ENCODE measurements at regions of chr1 and their contacts with region 1.

Region 1: DNA sequence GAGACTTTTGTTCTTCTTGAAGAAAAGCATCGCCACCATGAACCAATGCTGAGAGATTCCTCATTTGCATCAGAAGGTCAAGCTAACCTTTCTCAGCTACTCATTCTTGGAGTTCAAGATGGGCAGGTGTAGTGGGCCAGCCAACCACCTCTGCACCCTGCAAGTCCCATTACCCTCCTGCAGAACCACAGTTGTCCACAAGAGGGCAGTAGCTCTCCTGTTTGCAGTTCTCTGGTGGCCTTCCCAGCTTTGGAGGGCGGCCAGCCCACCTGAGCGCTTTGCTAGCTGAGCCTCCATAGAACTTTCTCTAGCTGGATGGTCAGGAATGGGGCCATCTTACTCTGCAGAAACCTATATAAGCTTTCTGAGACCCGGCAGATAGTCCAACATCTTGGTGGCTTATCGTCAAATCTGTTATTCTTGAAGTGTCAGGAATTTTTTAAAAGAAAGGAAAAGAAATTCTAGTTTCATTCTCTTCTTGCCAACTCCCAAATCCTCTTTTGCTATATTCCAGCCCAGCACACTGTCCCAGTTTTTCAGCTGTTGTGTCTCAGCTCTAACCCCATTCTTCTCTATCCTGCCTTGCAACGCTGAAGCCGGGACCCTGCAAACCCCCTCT is 11.0 kb upstream of the LMX1A start:
- H3K4me3 ChIP-seq: no peak overlapping the region
- H3K27ac ChIP-seq: no peak overlapping the region
- H3K4me1 ChIP-seq: no peaks in the 10 kb centered on the region
- CTCF ChIP-seq: peak; percentile 47; the same call in 1 of the 2 replicates

Region 2: GRCh38 chr1:164999146-164999545 is 368.3 kb before region 1 on chr1:
- CTCF ChIA-PET with region 1: no interaction called
- POLR2A ChIA-PET with region 1: no interaction called
- H3K4me3 ChIP-seq: no peak overlapping the region
- H3K27ac ChIP-seq: no peak overlapping the region
- H3K4me1 ChIP-seq: no peaks in the 10 kb centered on the region
- CTCF ChIP-seq: no peak

Region 3: DNA sequence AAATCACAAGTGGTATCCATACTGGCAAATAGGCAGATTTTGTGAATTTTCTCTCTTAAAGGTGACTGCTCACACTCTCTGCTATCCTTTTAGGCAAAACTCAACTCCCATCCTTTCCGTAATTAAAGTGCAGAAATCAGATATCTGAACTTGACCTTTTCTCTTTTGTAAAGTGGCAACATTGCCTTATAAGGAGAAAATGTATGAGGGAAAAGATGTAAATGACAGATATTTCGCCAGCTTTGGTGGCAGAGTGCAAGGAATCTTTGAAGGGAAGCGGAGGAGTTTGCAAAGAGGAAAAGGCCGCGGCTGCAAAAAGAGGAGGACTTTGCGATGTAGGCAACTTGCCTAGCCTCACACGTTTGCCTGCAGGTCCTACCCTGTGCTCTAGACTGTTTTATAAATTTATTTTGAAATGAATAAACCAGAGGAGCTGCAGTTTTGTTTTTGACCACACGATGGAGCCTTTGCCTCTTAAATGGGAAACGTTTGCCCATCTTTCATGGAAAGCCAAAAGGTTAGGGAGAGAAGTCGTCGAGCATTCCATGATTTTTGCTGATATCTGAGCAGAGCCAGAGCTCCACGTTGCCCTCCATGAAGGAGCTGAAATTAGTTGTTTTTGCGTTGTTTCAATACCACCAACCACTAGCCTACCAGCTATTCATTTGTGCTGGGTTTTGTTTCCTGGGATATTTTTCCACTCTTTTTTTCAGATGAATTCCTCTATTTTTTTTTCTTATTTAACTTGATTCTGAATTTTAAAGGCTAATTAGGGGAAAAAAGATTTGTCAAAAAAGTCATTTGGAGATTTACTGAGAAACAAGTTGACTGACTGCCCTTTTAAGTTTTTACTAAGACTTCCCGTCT is 253.2 kb before region 1 on chr1:
- CTCF ChIA-PET with region 1: interaction called, 14 read pairs
- POLR2A ChIA-PET with region 1: no interaction called
- H3K4me3 ChIP-seq: no peak overlapping the region
- H3K27ac ChIP-seq: no peak overlapping the region
- H3K4me1 ChIP-seq: no peaks in the 10 kb centered on the region
- CTCF ChIP-seq: peak; percentile 24; the same call in 1 of the 2 replicates

Region 4: DNA sequence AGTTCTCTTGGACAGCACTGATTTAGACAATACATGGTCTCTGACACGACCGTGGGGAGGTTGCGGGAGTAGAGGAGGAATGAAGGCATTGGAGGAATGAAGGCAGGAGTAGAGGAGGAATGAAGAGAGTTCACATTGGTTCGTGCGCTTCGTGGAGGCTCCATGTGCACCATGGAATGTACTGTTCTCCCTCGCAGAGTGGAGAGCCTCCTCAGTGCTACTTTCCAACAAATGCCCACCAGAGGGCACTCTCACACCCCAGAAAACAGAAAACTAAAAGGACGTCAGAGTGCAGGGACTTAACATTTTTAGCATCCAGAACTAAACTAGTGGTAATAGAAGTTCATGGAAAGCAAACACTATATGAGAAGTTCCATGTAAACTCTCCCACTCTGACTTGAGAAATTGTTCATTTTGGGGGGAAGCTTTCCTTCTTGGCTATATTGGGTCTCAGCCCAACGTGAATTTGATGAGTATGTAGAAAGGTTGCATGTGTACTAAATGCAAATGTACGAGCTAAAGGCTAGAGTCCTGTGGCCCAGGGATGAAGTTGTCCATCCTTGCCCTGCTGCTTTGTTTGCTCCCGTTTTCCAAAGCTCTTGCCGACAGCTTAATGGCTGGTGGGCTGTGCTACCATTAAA is 222.6 kb before region 1 on chr1:
- CTCF ChIA-PET with region 1: interaction called, 46 read pairs
- POLR2A ChIA-PET with region 1: no interaction called
- H3K4me3 ChIP-seq: no peak overlapping the region
- H3K27ac ChIP-seq: no peak overlapping the region
- H3K4me1 ChIP-seq: no peaks in the 10 kb centered on the region
- CTCF ChIP-seq: peak; percentile 55

Region 5: DNA sequence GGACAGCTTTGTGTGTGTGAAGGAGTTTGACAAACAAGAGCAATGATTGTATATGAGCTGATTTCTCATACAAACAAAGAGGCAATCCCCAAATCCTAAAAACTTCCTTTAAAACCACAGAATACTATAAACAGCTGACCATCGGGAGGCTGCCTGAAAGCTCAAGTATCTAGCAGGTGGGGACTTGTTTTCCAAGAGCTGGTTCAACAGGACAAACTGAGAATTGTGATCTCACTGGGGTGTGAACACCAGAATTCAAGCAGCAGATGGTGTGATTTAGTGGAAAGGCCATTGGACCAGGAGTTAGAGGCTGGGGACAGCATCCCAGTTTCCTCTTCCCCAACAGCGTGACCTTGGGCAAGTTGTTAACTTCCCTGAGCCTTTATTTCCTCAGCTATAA is 24.9 kb before region 1 on chr1:
- CTCF ChIA-PET with region 1: interaction called, 49 read pairs
- POLR2A ChIA-PET with region 1: no interaction called
- H3K4me3 ChIP-seq: no peak overlapping the region
- H3K27ac ChIP-seq: no peak overlapping the region
- H3K4me1 ChIP-seq: no peaks in the 10 kb centered on the region
- CTCF ChIP-seq: no peak

Region 6: DNA sequence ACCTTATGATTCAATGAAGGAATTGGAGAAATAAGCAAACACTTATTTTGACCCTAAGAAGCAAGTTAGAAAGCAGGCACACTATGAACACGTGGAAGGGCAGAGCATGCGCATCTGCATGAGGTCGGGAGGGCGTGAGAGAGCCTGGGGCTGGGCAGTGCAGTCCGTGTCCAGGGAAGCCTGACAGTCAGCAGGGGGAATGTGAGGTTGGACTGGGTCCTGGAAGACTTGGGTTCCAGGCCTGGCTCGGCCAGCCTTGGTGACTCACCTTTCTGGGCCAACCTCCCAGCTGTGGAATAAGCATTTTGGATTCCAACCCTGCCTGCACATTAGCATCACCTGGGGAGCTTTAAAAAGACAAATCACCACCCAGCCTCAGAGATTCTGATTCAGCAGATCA is 15.6 kb after region 1 on chr1:
- CTCF ChIA-PET with region 1: interaction called, 32 read pairs
- POLR2A ChIA-PET with region 1: no interaction called
- H3K4me3 ChIP-seq: no peak overlapping the region
- H3K27ac ChIP-seq: no peak overlapping the region
- H3K4me1 ChIP-seq: no peaks in the 10 kb centered on the region
- CTCF ChIP-seq: no peak

Region 7: GRCh38 chr1:165403835-165404482 is 36.5 kb after region 1 on chr1:
- CTCF ChIA-PET with region 1: interaction called, 16 read pairs
- POLR2A ChIA-PET with region 1: no interaction called
- H3K4me3 ChIP-seq: no peak overlapping the region
- H3K27ac ChIP-seq: no peak overlapping the region
- H3K4me1 ChIP-seq: no peaks in the 10 kb centered on the region
- CTCF ChIP-seq: peak; percentile 87

Region 8: GRCh38 chr1:165753934-165754333 is 386.4 kb after region 1 on chr1:
- CTCF ChIA-PET with region 1: no interaction called
- POLR2A ChIA-PET with region 1: no interaction called
- H3K4me3 ChIP-seq: no peak overlapping the region
- H3K27ac ChIP-seq: no peak overlapping the region
- H3K4me1 ChIP-seq: no peaks in the 10 kb centered on the region
- CTCF ChIP-seq: no peak